ENCODE measurements at regions of chr2 and their contacts with region 1.

Region 1: GRCh38 chr2:109545828-109546713 is 67.7 kb downstream of the SEPTIN10 start:
- DNase-seq: peak; percentile 72
- H3K4me3 Mint-ChIP-seq: no peak overlapping the region
- H3K27ac Mint-ChIP-seq: no peak overlapping the region
- H3K4me1 Mint-ChIP-seq: no peaks in the 10 kb centered on the region
- H3K27me3 Mint-ChIP-seq: no peaks in the 10 kb centered on the region

Region 2: DNA sequence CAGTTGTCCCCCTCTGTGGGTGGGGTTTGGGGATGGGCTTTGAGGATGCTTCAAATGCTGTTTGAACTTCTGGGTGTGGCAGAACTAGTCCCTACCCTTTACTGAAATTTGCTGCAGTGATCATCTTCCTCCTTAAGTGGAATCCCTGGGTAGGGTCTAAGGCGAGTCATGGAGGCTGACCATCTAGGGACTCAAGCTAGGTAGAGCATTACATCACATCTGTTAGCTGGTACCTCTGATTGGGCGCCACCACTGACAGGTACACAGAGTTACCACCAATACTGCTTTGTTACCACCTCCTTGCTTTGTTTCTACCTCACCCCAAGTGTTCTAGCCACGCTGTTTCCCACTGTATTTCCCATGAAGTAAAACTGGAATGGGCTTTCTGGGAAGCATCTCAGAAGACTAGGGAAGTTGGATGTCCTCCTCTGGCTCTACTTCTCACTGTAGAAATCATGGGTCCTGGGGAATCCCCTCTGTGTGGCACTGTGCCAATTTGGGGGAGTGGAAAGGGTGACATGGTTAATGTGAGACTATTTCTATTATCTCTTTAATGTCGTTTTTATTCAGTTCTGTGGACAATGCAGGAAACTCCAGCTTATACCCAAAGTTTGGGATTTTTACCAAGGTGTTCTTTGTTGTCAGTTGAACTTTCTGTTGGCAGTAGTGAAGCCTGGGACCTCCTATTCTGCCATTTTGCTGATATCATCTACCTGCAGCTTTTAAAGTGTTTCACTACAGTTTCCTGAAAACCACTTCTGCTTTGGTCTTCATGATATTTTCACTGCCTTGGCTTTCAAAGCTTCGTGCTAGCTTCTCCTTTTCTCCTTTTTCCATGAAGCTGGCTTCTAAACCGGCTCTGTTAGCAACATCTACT is 1182.8 kb before region 1 on chr2:
- CTCF ChIA-PET with region 1: no interaction called
- POLR2A ChIA-PET with region 1: no interaction called
- intact Hi-C with region 1: no loop called
- DNase-seq: no peak
- H3K4me3 Mint-ChIP-seq: no peak overlapping the region
- H3K27ac Mint-ChIP-seq: no peak overlapping the region
- H3K4me1 Mint-ChIP-seq: no peaks in the 10 kb centered on the region
- H3K27me3 Mint-ChIP-seq: peaks cover 16% of the 10 kb centered on the region

Region 3: GRCh38 chr2:109558076-109558882 is 12.2 kb after region 1 on chr2:
- CTCF ChIA-PET with region 1: interaction called, 25 read pairs
- POLR2A ChIA-PET with region 1: no interaction called
- intact Hi-C with region 1: no loop called
- DNase-seq: no peak
- H3K4me3 Mint-ChIP-seq: no peak overlapping the region
- H3K27ac Mint-ChIP-seq: no peak overlapping the region
- H3K4me1 Mint-ChIP-seq: peaks cover 2% of the 10 kb centered on the region
- H3K27me3 Mint-ChIP-seq: no peaks in the 10 kb centered on the region

Region 4: DNA sequence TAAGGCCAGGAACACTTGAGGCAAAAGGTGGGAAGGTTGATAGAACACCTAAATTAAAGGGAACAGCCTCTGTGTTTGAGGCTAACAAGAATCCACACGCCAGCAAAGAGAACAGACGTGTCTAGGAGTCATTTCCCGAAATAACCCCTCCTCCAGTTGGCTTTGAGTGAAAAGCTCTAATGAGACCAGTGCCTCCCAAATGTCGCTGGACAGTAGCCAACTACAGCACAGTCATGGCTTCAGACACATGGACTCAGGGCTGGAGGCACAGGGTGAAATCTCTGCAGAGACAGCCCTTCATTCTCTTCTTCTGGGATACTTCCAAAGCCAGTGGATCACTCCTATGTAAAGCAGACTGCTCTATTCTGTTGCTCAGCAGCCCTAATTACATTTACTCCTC is 117.7 kb after region 1 on chr2:
- CTCF ChIA-PET with region 1: interaction called, 18 read pairs
- POLR2A ChIA-PET with region 1: no interaction called
- intact Hi-C with region 1: loop called (anchors 1 kb)
- DNase-seq: no peak
- H3K4me3 Mint-ChIP-seq: no peak overlapping the region
- H3K27ac Mint-ChIP-seq: no peak overlapping the region
- H3K4me1 Mint-ChIP-seq: no peaks in the 10 kb centered on the region
- H3K27me3 Mint-ChIP-seq: peaks cover 14% of the 10 kb centered on the region

Region 5: DNA sequence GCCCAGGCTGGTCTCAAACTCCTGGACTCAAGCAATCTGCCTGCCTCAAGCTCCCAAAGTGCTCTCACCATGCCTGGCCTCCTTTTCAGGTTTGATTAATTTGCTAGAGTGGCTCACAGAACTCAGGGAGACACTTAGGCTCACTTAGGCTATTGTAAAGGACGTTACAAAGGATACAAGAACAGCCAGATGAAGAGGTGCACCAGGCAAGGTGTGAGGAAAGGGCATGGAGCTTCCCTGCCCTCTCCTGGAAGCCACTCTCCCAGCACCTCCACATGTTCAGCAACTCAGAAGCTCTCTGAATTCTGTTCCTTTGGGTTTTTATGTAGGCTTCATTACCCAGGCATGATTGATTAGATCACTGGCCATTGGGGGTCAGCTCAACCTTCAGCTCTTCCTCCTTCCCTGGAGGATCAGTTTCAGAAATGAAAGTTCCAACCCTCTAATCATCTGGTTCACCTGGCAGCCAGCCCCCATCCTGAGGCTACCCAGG is 169.3 kb after region 1 on chr2:
- CTCF ChIA-PET with region 1: interaction called, 12 read pairs
- POLR2A ChIA-PET with region 1: no interaction called
- intact Hi-C with region 1: loop called (anchors 10 kb)
- DNase-seq: peak; percentile 13
- H3K4me3 Mint-ChIP-seq: no peak overlapping the region
- H3K27ac Mint-ChIP-seq: no peak overlapping the region
- H3K4me1 Mint-ChIP-seq: no peaks in the 10 kb centered on the region
- H3K27me3 Mint-ChIP-seq: peaks cover 5% of the 10 kb centered on the region

Region 6: GRCh38 chr2:109736177-109736827 is 190.2 kb after region 1 on chr2:
- CTCF ChIA-PET with region 1: interaction called, 33 read pairs
- POLR2A ChIA-PET with region 1: no interaction called
- intact Hi-C with region 1: loop called (anchors 1 kb)
- DNase-seq: peak; percentile 27
- H3K4me3 Mint-ChIP-seq: no peak overlapping the region
- H3K27ac Mint-ChIP-seq: no peak overlapping the region
- H3K4me1 Mint-ChIP-seq: no peaks in the 10 kb centered on the region
- H3K27me3 Mint-ChIP-seq: peaks cover 18% of the 10 kb centered on the region

Region 7: GRCh38 chr2:110770959-110771431 is 1224.9 kb after region 1 on chr2:
- CTCF ChIA-PET with region 1: no interaction called
- POLR2A ChIA-PET with region 1: no interaction called
- intact Hi-C with region 1: no loop called
- DNase-seq: no peak
- H3K4me3 Mint-ChIP-seq: no peak overlapping the region
- H3K27ac Mint-ChIP-seq: no peak overlapping the region
- H3K4me1 Mint-ChIP-seq: no peaks in the 10 kb centered on the region
- H3K27me3 Mint-ChIP-seq: peaks cover 33% of the 10 kb centered on the region

Measured in activated CD4-positive, alpha-beta memory T cell treated with anti-CD3 and anti-CD28 coated beads for 36 hours (primary cell).